Panc1 (cell line): ENCODE measurements at regions of chr18 and their contacts with region 1.

Region 1: DNA sequence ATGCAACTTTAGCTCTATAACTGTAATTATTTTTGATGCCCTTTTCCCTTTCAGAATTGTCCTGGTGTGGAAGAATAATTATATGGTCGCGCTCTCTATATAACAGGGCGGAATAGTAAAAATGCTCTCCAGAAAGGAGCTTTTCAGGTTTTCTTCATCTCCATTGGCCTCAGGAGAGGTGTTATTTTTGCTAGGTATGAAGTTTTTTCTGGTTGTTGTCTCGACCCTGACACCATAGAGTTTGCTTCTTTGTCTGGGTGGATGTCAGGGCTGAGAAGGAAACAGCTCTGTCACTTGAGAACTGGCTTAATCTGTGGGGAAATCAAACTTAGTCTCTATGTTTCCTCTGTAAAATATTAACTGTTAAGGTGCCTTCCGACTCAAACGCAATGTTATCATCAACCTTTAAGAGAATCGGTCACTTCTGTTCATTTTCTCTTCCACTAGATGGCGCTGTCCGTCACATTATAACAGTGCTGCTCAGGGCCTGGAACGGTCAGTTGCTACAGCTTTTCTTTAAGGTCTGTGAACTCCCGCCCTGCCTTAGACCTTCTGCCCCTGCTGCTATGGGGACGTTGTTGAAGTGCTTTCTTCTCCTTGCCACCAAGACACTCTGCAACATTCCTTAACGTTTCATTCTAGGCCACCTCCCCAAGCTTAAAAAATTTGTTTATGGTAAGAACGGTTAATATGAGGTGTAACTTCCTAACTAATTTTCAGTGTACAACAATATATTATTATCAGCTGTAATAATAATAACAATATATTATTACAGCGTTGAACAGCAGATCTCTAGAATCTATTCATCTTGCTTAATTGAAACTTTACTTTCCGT is 23.8 kb upstream of the SERPINB12 start:
- DNase-seq: peak; percentile 20
- ATAC-seq: peak; percentile 92
- H3K4me3 ChIP-seq: no peak overlapping the region
- H3K27ac ChIP-seq: no peak overlapping the region
- H3K4me1 ChIP-seq: no peaks in the 10 kb centered on the region
- H3K27me3 ChIP-seq: no peaks in the 10 kb centered on the region
- CTCF ChIP-seq: peak; percentile 65

Region 2: GRCh38 chr18:62919109-62919838 is 599.1 kb before region 1 on chr18:
- CTCF ChIA-PET with region 1: no interaction called
- POLR2A ChIA-PET with region 1: no interaction called
- in situ Hi-C with region 1: no loop called
- intact Hi-C with region 1: no loop called
- DNase-seq: no peak
- ATAC-seq: no peak
- H3K4me3 ChIP-seq: no peak overlapping the region
- H3K27ac ChIP-seq: no peak overlapping the region
- H3K4me1 ChIP-seq: no peaks in the 10 kb centered on the region
- H3K27me3 ChIP-seq: no peaks in the 10 kb centered on the region
- CTCF ChIP-seq: no peak

Region 3: GRCh38 chr18:63539904-63540510 is 21.6 kb after region 1 on chr18:
- CTCF ChIA-PET with region 1: no interaction called
- POLR2A ChIA-PET with region 1: no interaction called
- in situ Hi-C with region 1: no loop called
- intact Hi-C with region 1: no loop called
- DNase-seq: no peak
- ATAC-seq: no peak
- H3K4me3 ChIP-seq: no peak overlapping the region
- H3K27ac ChIP-seq: no peak overlapping the region
- H3K4me1 ChIP-seq: no peaks in the 10 kb centered on the region
- H3K27me3 ChIP-seq: no peaks in the 10 kb centered on the region
- CTCF ChIP-seq: no peak

Region 4: DNA sequence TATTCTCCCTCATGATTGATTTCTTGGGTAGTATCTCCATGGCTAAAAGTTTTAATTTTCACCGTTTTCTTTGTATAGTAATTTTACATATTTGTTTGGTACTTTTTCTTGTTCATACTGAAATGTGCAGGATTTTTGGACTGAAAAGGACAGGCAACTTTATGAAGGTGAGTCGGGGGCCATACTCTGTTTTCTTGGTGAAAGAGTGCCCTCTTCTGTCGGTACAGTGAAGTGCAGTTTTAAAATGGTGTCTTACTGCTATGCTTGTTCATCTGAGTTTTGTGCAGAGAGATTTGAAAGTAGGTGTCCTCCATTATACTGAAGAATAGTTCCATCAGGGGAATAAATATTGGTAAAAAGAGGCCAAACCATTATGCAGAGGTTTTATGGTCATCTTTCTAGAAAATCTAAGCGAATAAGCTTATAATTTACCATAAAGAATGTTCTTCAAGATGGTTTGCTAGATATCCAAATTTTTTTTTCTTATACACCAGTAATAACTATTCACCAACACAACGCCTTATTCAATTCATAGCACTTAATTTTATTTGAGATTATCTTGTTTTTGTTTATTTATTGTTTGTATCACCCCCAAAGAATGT is 60.1 kb after region 1 on chr18:
- CTCF ChIA-PET with region 1: interaction called, 4 read pairs
- POLR2A ChIA-PET with region 1: no interaction called
- in situ Hi-C with region 1: no loop called
- intact Hi-C with region 1: loop called (anchors 1 kb)
- DNase-seq: peak; percentile 17
- ATAC-seq: no peak
- H3K4me3 ChIP-seq: no peak overlapping the region
- H3K27ac ChIP-seq: no peak overlapping the region
- H3K4me1 ChIP-seq: no peaks in the 10 kb centered on the region
- H3K27me3 ChIP-seq: no peaks in the 10 kb centered on the region
- CTCF ChIP-seq: peak; percentile 56; the same call in 1 of the 2 replicates

Region 5: GRCh38 chr18:63848159-63848558 is 329.8 kb after region 1 on chr18:
- CTCF ChIA-PET with region 1: interaction called, 4 read pairs
- POLR2A ChIA-PET with region 1: no interaction called
- in situ Hi-C with region 1: no loop called
- intact Hi-C with region 1: loop called (anchors 1 kb)
- DNase-seq: no peak
- ATAC-seq: peak; percentile 65; the same call in 1 of the 2 replicates
- H3K4me3 ChIP-seq: no peak overlapping the region
- H3K27ac ChIP-seq: no peak overlapping the region
- H3K4me1 ChIP-seq: no peaks in the 10 kb centered on the region
- H3K27me3 ChIP-seq: no peaks in the 10 kb centered on the region
- CTCF ChIP-seq: peak; percentile 54

Region 6: DNA sequence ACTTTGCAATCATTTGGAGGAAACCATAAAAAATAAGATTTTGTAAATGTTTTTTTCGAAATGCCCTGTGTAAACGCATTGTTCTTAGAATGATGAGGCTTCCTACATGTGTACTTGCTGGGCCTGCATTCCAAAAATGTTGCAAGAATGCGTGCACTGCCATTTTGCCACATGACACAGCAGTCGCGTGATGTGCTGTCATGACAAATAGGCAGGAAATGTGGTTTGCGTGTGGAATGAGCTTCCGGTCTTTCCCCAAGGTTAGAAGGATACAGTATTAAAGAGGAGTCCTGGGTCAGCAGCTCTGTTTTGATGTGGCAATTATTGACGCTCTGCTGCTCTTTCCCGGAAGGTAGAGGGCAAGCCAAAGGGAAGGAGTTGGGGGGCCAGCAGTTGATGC is 351.0 kb after region 1 on chr18:
- CTCF ChIA-PET with region 1: no interaction called
- POLR2A ChIA-PET with region 1: no interaction called
- in situ Hi-C with region 1: no loop called
- intact Hi-C with region 1: no loop called
- DNase-seq: no peak
- ATAC-seq: no peak
- H3K4me3 ChIP-seq: no peak overlapping the region
- H3K27ac ChIP-seq: no peak overlapping the region
- H3K4me1 ChIP-seq: no peaks in the 10 kb centered on the region
- H3K27me3 ChIP-seq: no peaks in the 10 kb centered on the region
- CTCF ChIP-seq: no peak